Activated CD8-positive, alpha-beta T cell treated with anti-CD3 and anti-CD28 coated beads, Interleukin-2, amount 10 ng/mL, durations not matched to agents 7 days and 5 days (primary cell): ENCODE measurements at regions of chr14 and their contacts with region 1.

Region 1: DNA sequence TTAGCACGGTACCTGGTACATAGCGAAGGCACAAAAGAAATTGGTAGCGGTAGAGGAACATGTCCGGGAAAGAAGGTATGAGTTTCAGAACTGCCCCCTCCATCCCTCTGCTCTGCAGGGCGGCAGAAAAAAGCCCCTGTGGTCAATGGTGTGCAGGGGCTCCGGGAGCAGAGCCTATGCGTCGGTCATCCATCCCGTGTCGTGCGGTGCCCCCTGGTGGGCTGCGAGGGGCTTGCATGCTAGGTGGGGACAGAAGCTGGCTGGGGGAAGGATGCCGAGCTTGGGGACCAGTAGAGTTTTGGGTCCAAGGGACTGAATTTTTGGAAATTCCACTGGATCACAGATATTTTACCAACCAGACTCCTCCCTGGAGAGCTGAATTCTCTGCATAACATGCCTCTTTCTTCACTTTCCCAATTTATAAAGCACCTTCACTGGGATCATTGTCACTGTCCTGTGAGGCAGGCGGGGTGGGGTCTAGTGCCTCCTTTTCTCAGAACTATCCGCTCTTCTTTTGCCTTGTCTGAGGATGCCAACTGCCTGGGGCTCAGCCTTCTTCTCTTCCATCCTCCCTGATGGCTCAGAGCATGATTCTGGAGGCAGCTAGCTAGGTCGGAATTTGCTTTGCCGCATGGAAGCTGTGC is 148.7 kb downstream of the SMOC1 start:
- DNase-seq: peak; percentile 76
- ATAC-seq: peak; percentile 87
- H3K4me3 Mint-ChIP-seq: no peak overlapping the region
- H3K27ac Mint-ChIP-seq: no peak overlapping the region
- H3K4me1 Mint-ChIP-seq: no peaks in the 10 kb centered on the region
- H3K27me3 Mint-ChIP-seq: peaks cover 6% of the 10 kb centered on the region

Region 2: GRCh38 chr14:69812714-69813113 is 215.2 kb before region 1 on chr14:
- CTCF ChIA-PET with region 1: interaction called, 57 read pairs
- POLR2A ChIA-PET with region 1: no interaction called
- DNase-seq: no peak
- ATAC-seq: no peak
- H3K4me3 Mint-ChIP-seq: no peak overlapping the region
- H3K27ac Mint-ChIP-seq: no peak overlapping the region
- H3K4me1 Mint-ChIP-seq: no peaks in the 10 kb centered on the region
- H3K27me3 Mint-ChIP-seq: peaks cover 7% of the 10 kb centered on the region

Region 3: GRCh38 chr14:69818757-69819191 is 209.1 kb before region 1 on chr14:
- CTCF ChIA-PET with region 1: interaction called, 57 read pairs
- POLR2A ChIA-PET with region 1: no interaction called
- DNase-seq: peak; percentile 75
- ATAC-seq: peak; percentile 82
- H3K4me3 Mint-ChIP-seq: no peak overlapping the region
- H3K27ac Mint-ChIP-seq: no peak overlapping the region
- H3K4me1 Mint-ChIP-seq: peaks cover 3% of the 10 kb centered on the region
- H3K27me3 Mint-ChIP-seq: peaks cover 12% of the 10 kb centered on the region

Region 4: GRCh38 chr14:69879175-69880043 is 148.5 kb before region 1 on chr14 and contains the start of gene SMOC1:
- CTCF ChIA-PET with region 1: interaction called, 33 read pairs
- POLR2A ChIA-PET with region 1: no interaction called
- DNase-seq: no peak
- ATAC-seq: peak; percentile 30
- H3K4me3 Mint-ChIP-seq: no peak within 1 kb of the TSS
- H3K27ac Mint-ChIP-seq: no peak within 1 kb of the TSS
- H3K4me1 Mint-ChIP-seq: no peaks in the 10 kb centered on the region
- H3K27me3 Mint-ChIP-seq: peaks cover 59% of the 10 kb centered on the region
- total RNA-seq, gene SMOC1: not detected

Region 5: DNA sequence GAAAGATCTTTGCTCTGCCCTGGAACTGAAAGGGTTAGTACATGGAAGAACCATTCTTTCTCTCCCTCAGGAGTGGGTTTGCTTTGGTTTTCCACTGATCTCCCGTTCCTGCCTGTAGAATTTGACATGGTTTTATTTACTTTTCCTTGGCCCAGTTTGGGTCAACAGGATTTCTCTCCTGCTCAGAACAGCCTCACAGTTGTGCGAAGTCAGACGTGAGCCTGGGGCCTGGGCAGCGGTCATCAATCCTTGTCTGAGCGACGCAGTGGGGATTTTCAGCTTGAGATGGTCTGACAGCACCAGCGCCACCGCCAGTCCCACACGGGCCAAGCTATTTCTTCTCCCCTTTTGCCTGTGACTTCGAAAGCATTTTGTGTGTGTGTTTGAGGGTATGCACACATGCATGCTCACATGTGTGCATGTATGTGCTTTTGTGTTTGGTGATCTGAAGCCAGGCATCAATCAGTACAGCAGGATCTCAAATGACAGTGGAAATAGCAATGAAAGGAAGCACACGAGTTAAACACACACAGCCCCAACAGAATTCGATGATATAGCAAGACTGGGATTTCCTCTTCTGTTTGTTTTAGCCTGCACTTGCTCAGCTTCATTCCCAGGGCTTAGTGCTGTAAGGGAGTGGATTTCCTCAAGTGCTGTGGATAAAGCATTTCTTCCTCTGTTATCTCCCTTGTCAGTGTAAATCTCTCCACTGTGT is 90.4 kb before region 1 on chr14:
- CTCF ChIA-PET with region 1: no interaction called
- POLR2A ChIA-PET with region 1: no interaction called
- DNase-seq: no peak
- ATAC-seq: no peak
- H3K4me3 Mint-ChIP-seq: no peak overlapping the region
- H3K27ac Mint-ChIP-seq: no peak overlapping the region
- H3K4me1 Mint-ChIP-seq: no peaks in the 10 kb centered on the region
- H3K27me3 Mint-ChIP-seq: peaks cover 31% of the 10 kb centered on the region

Region 6: DNA sequence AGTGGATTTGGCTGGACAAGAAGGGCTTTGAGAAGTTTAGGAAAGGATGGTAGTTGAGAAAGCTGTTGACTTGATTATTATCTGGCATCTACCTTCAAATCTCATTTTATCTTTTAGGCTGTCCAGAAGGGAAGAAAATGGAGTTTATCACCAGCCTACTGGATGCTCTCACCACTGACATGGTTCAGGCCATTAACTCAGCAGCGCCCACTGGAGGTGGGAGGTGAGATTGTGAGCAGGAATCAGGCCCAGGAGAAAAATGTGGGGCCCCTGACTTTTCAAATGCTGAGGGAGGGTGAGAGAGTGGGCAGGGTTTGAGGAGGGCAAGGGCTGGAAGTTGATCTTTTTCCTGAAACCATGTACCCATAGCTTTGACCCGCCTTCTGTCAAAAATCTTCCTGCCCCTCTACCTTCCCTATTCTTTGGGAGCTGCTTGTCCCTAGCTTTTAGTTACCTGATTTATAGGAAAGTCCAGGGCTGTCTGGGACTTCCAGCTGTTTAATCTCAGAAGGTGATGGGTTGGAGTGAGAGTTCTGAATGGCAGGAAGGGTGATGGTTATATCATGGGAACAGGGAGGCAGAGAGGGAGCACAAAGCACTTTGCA is 14.5 kb before region 1 on chr14:
- CTCF ChIA-PET with region 1: interaction called, 20 read pairs
- POLR2A ChIA-PET with region 1: no interaction called
- DNase-seq: peak; percentile 54
- ATAC-seq: no peak
- H3K4me3 Mint-ChIP-seq: no peak overlapping the region
- H3K27ac Mint-ChIP-seq: no peak overlapping the region
- H3K4me1 Mint-ChIP-seq: peaks cover 7% of the 10 kb centered on the region
- H3K27me3 Mint-ChIP-seq: peaks cover 19% of the 10 kb centered on the region

Region 7: DNA sequence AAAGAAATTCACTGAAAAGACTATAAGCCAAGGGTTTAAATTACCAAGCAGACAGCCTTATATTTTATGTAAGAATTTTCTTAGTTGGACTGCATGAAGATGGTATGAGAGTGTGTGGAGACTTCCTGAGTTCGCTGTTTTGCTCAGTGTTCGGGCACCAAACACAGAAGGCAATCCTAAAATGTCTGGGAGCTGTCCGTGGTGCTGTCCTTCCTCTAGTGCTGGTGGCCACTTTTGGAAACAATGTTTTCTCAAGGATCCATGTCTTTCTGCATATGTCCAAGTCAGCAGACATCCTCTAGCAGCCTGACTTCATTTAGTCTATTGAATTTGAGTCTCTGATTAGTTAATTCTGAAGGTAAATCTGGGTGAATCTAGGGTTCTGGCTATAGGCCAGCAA is 25.1 kb after region 1 on chr14:
- CTCF ChIA-PET with region 1: interaction called, 11 read pairs
- POLR2A ChIA-PET with region 1: no interaction called
- DNase-seq: peak; percentile 57
- ATAC-seq: no peak
- H3K4me3 Mint-ChIP-seq: no peak overlapping the region
- H3K27ac Mint-ChIP-seq: no peak overlapping the region
- H3K4me1 Mint-ChIP-seq: peaks cover 9% of the 10 kb centered on the region
- H3K27me3 Mint-ChIP-seq: no peaks in the 10 kb centered on the region